ENCODE measurements at regions of chr5 and their contacts with region 1.

Region 1: GRCh38 chr5:126354012-126354857 is 69.0 kb upstream of the GRAMD2B start:
- DNase-seq: peak in 2 of 4 experiments; percentile 52 to 58
- ATAC-seq: peak; percentile 86
- H3K4me3 ChIP-seq: no peak overlapping the region
- H3K27ac ChIP-seq: peak overlapping the region; percentile 55
- H3K4me1 ChIP-seq: peaks cover 0 to 10% of the 10 kb centered on the region in 2 experiments; a peak in 2 of 5 replicates
- H3K27me3 ChIP-seq: no peaks in the 10 kb centered on the region
- CTCF ChIP-seq: peak; percentile 50 to 81 (median 54); a peak in 4 of 6 replicates
- EP300 ChIP-seq: no peak
- POLR2A ChIP-seq: no peak
- RAD21 ChIP-seq: peak; percentile 94 to 97

Region 2: GRCh38 chr5:126462239-126463014 is 108.2 kb after region 1 on chr5:
- CTCF ChIA-PET with region 1: no interaction called
- POLR2A ChIA-PET with region 1: no interaction called
- in situ Hi-C with region 1: no loop called
- intact Hi-C with region 1: no loop called
- DNase-seq: no peak
- ATAC-seq: no peak
- H3K4me3 ChIP-seq: no peak overlapping the region
- H3K27ac ChIP-seq: no peak overlapping the region
- H3K4me1 ChIP-seq: peaks cover 0 to 3% of the 10 kb centered on the region in 2 experiments; a peak in 1 of 5 replicates
- H3K27me3 ChIP-seq: peaks cover 0 to 11% of the 10 kb centered on the region in 2 experiments; a peak in 2 of 5 replicates
- CTCF ChIP-seq: no peak
- EP300 ChIP-seq: no peak
- POLR2A ChIP-seq: no peak
- RAD21 ChIP-seq: no peak

Region 3: GRCh38 chr5:126490167-126490940 is 136.1 kb after region 1 on chr5:
- CTCF ChIA-PET with region 1: interaction called, 8 read pairs
- POLR2A ChIA-PET with region 1: no interaction called
- in situ Hi-C with region 1: no loop called
- intact Hi-C with region 1: loop called (anchors 1 kb)
- DNase-seq: no peak
- ATAC-seq: peak; percentile 82
- H3K4me3 ChIP-seq: no peak overlapping the region
- H3K27ac ChIP-seq: no peak overlapping the region
- H3K4me1 ChIP-seq: peaks cover 0 to 3% of the 10 kb centered on the region in 2 experiments; a peak in 1 of 5 replicates
- H3K27me3 ChIP-seq: no peaks in the 10 kb centered on the region
- CTCF ChIP-seq: peak; percentile 16 to 51 (median 41); a peak in 3 of 6 replicates
- EP300 ChIP-seq: no peak
- POLR2A ChIP-seq: no peak
- RAD21 ChIP-seq: peak in 1 of 2 experiments; percentile 42; a peak in 2 of 4 replicates

Region 4: DNA sequence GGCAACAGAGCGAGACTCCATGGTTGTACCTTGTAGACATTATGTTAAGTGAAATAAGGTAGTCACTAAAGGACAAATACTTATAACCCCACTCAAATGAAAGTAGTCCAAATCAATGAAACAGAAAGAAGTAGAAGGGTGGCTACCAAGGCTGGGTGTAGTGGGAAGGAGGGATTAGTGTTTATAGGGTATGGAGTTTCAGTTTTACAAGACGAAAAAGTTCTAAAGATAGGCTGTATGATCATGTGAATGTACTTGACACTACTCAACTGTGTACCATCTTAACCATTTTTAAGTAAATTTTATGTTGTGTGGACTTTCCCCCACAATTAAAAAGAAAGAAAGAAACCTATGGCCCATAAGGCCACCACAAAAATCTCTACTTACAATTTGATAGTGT is 208.6 kb after region 1 on chr5:
- CTCF ChIA-PET with region 1: no interaction called
- POLR2A ChIA-PET with region 1: no interaction called
- in situ Hi-C with region 1: no loop called
- intact Hi-C with region 1: no loop called
- DNase-seq: no peak
- ATAC-seq: no peak
- H3K4me3 ChIP-seq: no peak overlapping the region
- H3K27ac ChIP-seq: no peak overlapping the region
- H3K4me1 ChIP-seq: no peaks in the 10 kb centered on the region
- H3K27me3 ChIP-seq: peaks cover 3 to 4% of the 10 kb centered on the region in 2 experiments; a peak in 2 of 5 replicates
- CTCF ChIP-seq: no peak
- EP300 ChIP-seq: no peak
- POLR2A ChIP-seq: no peak
- RAD21 ChIP-seq: no peak

Region 5: GRCh38 chr5:126808521-126808988 is 454.3 kb after region 1 on chr5:
- CTCF ChIA-PET with region 1: no interaction called
- POLR2A ChIA-PET with region 1: no interaction called
- in situ Hi-C with region 1: no loop called
- intact Hi-C with region 1: loop called (anchors 10 kb)
- DNase-seq: peak; percentile 22 to 31 (median 25)
- ATAC-seq: peak; percentile 80
- H3K4me3 ChIP-seq: no peak overlapping the region
- H3K27ac ChIP-seq: no peak overlapping the region
- H3K4me1 ChIP-seq: peaks cover 0 to 3% of the 10 kb centered on the region in 2 experiments; a peak in 1 of 5 replicates
- H3K27me3 ChIP-seq: no peaks in the 10 kb centered on the region
- CTCF ChIP-seq: peak; percentile 43 to 70 (median 44); a peak in 5 of 6 replicates
- EP300 ChIP-seq: no peak
- POLR2A ChIP-seq: no peak
- RAD21 ChIP-seq: peak; percentile 37 to 61